H1 (cell line): ENCODE measurements at regions of chr17 and their contacts with region 1.

Region 1: DNA sequence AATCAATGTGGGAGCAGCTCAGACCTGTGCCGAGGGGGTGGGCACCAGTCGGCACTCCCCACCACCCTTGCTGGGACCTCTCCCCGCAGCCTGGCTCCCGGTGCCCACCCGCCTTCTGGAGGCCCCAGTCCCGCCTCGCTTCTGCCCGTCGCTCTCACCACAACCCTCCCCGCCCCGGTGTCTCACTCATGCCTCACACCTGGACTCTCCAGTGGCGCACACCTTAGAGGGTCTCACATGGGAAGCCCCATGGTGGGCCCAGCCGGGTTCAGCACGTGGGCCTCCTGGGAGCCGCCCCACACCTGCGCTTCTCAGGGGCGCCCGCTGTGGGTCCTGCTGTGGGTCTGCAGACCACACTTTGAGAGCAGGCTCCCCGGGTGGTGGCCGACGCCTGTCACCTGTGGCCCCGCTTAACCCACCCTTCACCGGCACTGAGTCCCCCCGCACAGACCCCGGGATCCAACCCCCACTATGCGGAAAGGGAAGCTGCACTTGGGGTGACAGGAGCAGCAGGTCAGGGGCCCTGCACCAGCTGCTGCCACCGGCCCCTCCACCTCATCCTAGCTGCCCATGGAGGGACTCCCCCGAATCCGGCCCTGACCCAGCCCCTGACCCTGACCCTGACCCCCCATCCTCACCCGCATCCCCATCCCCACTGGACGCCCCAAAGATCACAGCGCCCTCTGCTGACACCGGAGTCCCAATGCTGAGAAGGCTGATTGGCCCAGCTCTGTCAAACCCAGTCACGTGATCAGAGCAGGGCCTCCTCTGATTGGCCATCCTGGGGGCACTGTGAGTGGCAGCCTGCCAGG is 27.4 kb upstream of the SLC38A10 start:
- DNase-seq: peak in 1 of 2 experiments; percentile 71
- H3K4me3 ChIP-seq: no peak overlapping the region
- H3K27ac ChIP-seq: no peak overlapping the region
- H3K4me1 ChIP-seq: peaks cover 0 to 6% (median 2%) of the 10 kb centered on the region in 4 experiments; a peak in 5 of 7 replicates
- H3K27me3 ChIP-seq: 0 out of 7 replicates have a peak, but pooled peaks cover 0 to 2% (median 0%) of the 10 kb centered on the region in 4 experiments
- CTCF ChIP-seq: peak; percentile 33 to 69 (median 64)
- EP300 ChIP-seq: no peak
- POLR2A ChIP-seq: no peak
- RAD21 ChIP-seq: peak in 1 of 2 experiments; percentile 38; a peak in 2 of 4 replicates

Region 2: DNA sequence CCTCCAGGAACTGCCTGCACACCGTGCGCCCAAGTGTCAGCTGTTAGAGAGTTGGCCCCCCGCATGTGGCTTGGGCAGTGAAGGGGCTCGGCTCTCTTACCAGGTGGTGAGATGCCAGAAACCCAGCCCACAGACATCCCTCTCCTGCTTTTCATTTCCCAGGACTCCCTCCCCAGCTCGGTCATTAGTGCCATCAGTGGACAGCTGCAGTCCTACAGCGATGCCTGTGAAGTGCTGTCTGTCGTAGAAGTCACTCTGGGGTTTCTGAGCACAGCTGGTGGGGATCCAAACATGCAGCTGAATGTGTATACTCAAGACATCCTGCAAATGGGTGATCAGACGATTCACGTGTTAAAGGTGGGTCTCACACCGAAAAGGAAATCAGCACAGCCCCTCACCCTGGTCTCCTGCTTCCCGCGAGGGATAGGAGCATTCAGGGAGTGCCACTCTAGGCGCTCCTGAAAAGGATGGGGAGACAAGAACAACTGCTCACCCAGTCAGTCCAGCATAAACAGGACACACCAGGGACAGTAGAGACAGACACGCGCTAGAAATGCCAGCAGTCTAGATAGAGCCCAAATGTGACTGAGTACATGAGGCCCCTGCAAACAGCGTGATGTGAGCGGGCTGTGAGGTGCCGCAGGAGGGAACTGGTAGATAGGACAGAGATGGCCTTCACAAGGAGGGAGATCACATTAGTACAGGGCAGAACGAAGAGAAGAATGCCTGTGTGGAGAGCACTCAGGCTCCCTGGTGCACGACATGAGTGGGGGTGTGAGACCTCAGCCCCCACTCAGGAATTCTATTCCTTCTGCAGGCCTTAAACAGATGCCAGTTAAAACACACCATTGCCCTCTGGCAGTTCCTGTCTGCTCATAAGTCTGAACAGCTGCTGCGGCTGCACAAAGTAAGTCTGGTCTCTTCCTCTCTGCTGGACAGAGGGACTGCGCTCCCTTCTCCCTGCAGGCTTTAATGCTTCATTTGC is 933.2 kb before region 1 on chr17:
- CTCF ChIA-PET with region 1: no interaction called
- POLR2A ChIA-PET with region 1: no interaction called
- DNase-seq: no peak
- H3K4me3 ChIP-seq: no peak overlapping the region
- H3K27ac ChIP-seq: no peak overlapping the region
- H3K4me1 ChIP-seq: no peaks in the 10 kb centered on the region
- H3K27me3 ChIP-seq: no peaks in the 10 kb centered on the region
- CTCF ChIP-seq: no peak
- EP300 ChIP-seq: no peak
- POLR2A ChIP-seq: no peak
- RAD21 ChIP-seq: no peak

Region 3: GRCh38 chr17:81277421-81277820 is 45.1 kb before region 1 on chr17:
- CTCF ChIA-PET with region 1: no interaction called
- POLR2A ChIA-PET with region 1: no interaction called
- DNase-seq: no peak
- H3K4me3 ChIP-seq: no peak overlapping the region
- H3K27ac ChIP-seq: no peak overlapping the region
- H3K4me1 ChIP-seq: peaks cover 0 to 4% (median 0%) of the 10 kb centered on the region in 4 experiments; a peak in 1 of 7 replicates
- H3K27me3 ChIP-seq: no peaks in the 10 kb centered on the region
- CTCF ChIP-seq: no peak
- EP300 ChIP-seq: no peak
- POLR2A ChIP-seq: no peak
- RAD21 ChIP-seq: no peak

Region 4: DNA sequence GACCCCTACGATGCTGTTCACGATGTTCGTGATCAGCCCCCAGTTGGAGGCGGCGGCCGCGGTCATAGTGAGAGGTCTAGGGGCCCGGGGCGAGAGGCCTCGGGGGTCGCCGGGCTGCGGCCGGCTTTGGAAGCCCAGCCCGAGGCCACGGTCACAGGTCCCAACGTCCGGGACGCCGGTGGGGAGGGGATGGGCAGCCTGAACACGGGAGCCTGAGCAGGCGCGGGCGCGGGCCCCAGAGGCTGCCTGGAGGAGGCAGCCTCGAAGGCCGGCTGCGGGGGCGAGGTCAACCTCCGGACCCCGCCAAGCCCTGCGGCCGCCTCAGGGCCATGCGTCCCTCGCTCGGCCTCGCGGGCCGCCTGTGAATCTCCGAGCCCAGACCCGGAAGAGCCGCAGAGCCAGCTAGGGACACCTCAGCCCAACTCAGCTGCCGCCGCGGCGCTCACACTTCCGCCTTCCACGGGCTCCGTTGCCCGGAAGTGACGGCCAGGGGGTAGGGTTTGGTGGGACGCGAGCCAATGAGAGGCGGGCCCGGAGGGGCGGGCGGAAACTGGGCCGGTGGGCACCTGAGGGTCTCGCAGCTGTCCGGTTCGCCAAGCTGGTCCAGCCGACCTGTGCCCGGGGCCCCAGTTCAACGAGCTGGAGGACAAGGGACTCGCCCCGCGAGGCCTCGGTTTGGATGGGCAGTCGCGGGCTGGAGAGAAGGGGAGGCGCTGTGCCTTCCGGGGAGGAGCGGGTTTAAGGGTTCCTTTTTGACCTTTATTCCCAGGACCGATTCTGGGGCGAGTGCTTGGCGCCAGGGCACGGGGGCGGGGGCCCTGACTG is 27.4 kb before region 1 on chr17 and contains the start of gene SLC38A10:
- CTCF ChIA-PET with region 1: interaction called, 27 read pairs
- POLR2A ChIA-PET with region 1: no interaction called
- DNase-seq: peak; percentile 21 to 92
- H3K4me3 ChIP-seq: peak within 1 kb of the TSS; percentile 65 to 89 (median 74)
- H3K27ac ChIP-seq: peak within 1 kb of the TSS; percentile 29; the same call in 1 of the 2 replicates
- H3K4me1 ChIP-seq: peaks cover 3 to 6% (median 4%) of the 10 kb centered on the region in 4 experiments; a peak in 5 of 7 replicates
- H3K27me3 ChIP-seq: no peaks in the 10 kb centered on the region
- CTCF ChIP-seq: 0 out of 4 replicates have a peak, but pooled peaks of 1 of the 3 experiments have one; percentile 1
- EP300 ChIP-seq: no peak
- POLR2A ChIP-seq: peak in 1 of 2 experiments; percentile 81; a peak in 2 of 3 replicates
- RAD21 ChIP-seq: no peak
- total RNA-seq, gene SLC38A10: 35.7 and 41.0 TPM in 2 replicates